Endothelial cell of umbilical vein (primary cell): ENCODE measurements at regions of chr14 and their contacts with region 1.

Region 1: DNA sequence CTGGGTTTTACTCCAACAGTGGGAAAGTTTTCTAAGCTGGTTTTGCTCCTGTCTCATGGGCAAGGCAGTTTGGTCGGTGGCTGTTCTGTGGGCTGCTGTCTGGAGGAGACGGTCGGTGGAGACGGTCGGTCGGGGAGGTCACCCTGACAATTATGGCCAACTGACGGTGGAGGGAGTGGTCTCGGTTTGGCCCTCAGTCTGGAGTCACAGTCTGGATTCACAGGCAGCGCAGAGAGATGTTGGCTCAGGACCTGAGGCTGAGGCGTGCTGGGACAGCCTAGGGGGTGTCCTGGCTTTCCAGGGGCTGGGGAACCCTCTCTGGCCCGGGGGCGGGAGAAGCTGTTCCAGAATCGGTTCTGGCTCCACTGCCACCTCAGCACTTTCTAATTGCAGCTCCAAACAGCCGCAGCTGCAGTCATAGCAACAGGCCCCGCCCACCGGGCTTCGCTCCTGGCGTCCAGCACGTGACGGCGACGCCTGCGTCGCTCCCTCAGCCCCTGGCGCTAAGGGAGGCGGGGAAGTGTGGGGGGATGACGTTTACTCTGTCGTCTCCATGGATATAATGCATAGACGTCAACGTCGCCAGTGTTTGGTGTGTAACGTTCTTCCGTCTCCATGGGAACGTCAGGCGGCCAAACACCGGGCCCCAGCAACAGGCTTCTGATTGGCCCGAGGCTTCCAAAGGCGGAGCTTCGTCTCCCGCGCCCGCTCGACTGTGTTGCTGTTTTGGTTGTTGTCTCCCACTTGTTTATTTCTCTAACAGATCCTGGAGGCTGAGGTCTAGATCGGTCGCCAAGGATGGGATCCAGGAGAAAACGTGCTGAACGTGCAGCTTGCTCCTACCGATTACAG is 19.8 kb upstream of the FOS start:
- DNase-seq: peak; percentile 100
- H3K4me3 ChIP-seq: peak overlapping the region in 2 of 3 experiments; percentile 21 to 39
- H3K27ac ChIP-seq: peak overlapping the region; percentile 75
- H3K4me1 ChIP-seq: peaks cover 32% of the 10 kb centered on the region
- H3K27me3 ChIP-seq: no peaks in the 10 kb centered on the region
- CTCF ChIP-seq: no peak
- POLR2A ChIP-seq: peak; percentile 7

Region 2: GRCh38 chr14:74988131-74988530 is 270.7 kb before region 1 on chr14:
- CTCF ChIA-PET with region 1: no interaction called
- POLR2A ChIA-PET with region 1: no interaction called
- dilution Hi-C with region 1: no loop called
- intact Hi-C with region 1: loop called (anchors 1 kb)
- DNase-seq: peak; percentile 97
- H3K4me3 ChIP-seq: no peak overlapping the region
- H3K27ac ChIP-seq: peak overlapping the region; percentile 99
- H3K4me1 ChIP-seq: peaks cover 39% of the 10 kb centered on the region
- H3K27me3 ChIP-seq: no peaks in the 10 kb centered on the region
- CTCF ChIP-seq: no peak
- POLR2A ChIP-seq: no peak

Region 3: GRCh38 chr14:75141967-75142366 is 116.9 kb before region 1 on chr14:
- CTCF ChIA-PET with region 1: interaction called, 12 read pairs
- POLR2A ChIA-PET with region 1: no interaction called
- dilution Hi-C with region 1: no loop called
- intact Hi-C with region 1: no loop called
- DNase-seq: peak; percentile 67
- H3K4me3 ChIP-seq: no peak overlapping the region
- H3K27ac ChIP-seq: no peak overlapping the region
- H3K4me1 ChIP-seq: no peaks in the 10 kb centered on the region
- H3K27me3 ChIP-seq: no peaks in the 10 kb centered on the region
- CTCF ChIP-seq: peak; percentile 55 to 62
- POLR2A ChIP-seq: no peak

Region 4: GRCh38 chr14:75205591-75205990 is 53.2 kb before region 1 on chr14:
- CTCF ChIA-PET with region 1: interaction called, 6 read pairs
- POLR2A ChIA-PET with region 1: no interaction called
- dilution Hi-C with region 1: no loop called
- intact Hi-C with region 1: loop called (anchors 2 kb)
- DNase-seq: peak; percentile 82
- H3K4me3 ChIP-seq: no peak overlapping the region
- H3K27ac ChIP-seq: peak overlapping the region; percentile 74
- H3K4me1 ChIP-seq: peaks cover 15% of the 10 kb centered on the region
- H3K27me3 ChIP-seq: no peaks in the 10 kb centered on the region
- CTCF ChIP-seq: no peak
- POLR2A ChIP-seq: no peak

Region 5: GRCh38 chr14:75234173-75235115 is 24.4 kb before region 1 on chr14:
- CTCF ChIA-PET with region 1: interaction called, 9 read pairs
- POLR2A ChIA-PET with region 1: no interaction called
- dilution Hi-C with region 1: no loop called
- intact Hi-C with region 1: loop called (anchors 1 kb)
- DNase-seq: peak; percentile 92
- H3K4me3 ChIP-seq: no peak overlapping the region
- H3K27ac ChIP-seq: peak overlapping the region; percentile 91
- H3K4me1 ChIP-seq: peaks cover 23% of the 10 kb centered on the region
- H3K27me3 ChIP-seq: no peaks in the 10 kb centered on the region
- CTCF ChIP-seq: no peak
- POLR2A ChIP-seq: no peak

Region 6: DNA sequence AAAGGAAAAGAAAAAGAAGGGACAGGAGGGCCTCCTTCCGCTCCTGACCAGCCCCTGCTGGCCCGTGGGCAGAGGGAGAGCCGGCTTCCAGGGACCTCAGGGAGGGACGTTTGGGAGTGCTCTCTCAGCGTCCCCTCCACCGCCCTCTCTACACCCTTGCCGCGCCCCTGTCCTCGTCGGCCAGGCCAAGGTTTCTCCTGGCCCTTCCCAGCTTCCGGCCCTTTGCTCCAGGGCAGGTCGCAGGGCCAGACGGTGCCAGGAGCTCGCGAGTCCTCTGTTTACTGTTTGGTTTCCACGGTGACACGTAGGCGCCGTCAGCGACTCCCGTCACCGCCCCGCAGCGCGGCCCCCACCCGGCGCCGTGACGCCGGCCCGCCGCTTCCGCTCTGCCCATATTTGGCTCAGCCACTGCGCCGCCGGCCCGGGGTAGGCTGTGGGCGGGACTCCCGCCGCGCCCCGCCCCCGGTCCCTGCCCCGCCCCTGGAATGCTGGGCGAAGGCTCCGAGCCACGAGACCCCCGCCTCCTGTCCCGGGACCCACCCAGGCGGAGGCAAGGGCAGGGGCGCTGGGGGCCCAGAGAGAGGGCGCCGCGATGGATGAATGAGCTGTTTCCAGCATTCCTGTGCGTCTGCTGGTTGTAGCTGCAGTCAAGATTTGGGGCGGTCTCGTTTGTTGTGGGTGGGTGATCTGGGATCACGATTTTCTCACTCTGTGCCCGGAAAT is 35.2 kb after region 1 on chr14:
- CTCF ChIA-PET with region 1: interaction called, 6 read pairs
- POLR2A ChIA-PET with region 1: no interaction called
- dilution Hi-C with region 1: no loop called
- intact Hi-C with region 1: loop called (anchors 1 kb)
- DNase-seq: peak; percentile 96
- H3K4me3 ChIP-seq: peak overlapping the region; percentile 34 to 78 (median 55)
- H3K27ac ChIP-seq: peak overlapping the region; percentile 88
- H3K4me1 ChIP-seq: peaks cover 16% of the 10 kb centered on the region
- H3K27me3 ChIP-seq: peaks cover 0 to 10% of the 10 kb centered on the region in 2 experiments
- CTCF ChIP-seq: no peak
- POLR2A ChIP-seq: no peak

Region 7: DNA sequence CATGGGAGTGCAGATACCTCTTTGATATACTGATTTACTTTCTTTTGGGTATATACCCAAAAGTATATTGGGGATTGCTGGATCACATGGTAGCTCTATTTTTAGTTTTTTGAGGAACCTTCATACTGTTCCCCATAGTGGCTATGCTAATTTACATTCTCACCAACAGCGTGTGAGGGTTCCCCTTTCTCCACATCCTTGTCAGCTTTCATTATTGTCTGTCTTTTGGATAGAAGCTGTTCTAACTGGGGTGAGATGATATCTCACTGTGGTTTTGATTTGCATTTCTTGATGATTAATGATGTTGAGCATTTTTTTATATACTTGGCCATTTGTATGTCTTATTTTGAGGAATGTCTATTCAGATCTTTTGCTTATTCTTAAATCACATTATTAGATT is 124.9 kb after region 1 on chr14:
- CTCF ChIA-PET with region 1: no interaction called
- POLR2A ChIA-PET with region 1: no interaction called
- dilution Hi-C with region 1: no loop called
- intact Hi-C with region 1: no loop called
- DNase-seq: no peak
- H3K4me3 ChIP-seq: no peak overlapping the region
- H3K27ac ChIP-seq: no peak overlapping the region
- H3K4me1 ChIP-seq: no peaks in the 10 kb centered on the region
- H3K27me3 ChIP-seq: peaks cover 13 to 38% of the 10 kb centered on the region in 2 experiments
- CTCF ChIP-seq: no peak
- POLR2A ChIP-seq: no peak